Activated naive CD4-positive, alpha-beta T cell treated with anti-CD3 and anti-CD28 coated beads for 36 hours (primary cell): ENCODE measurements at regions of chr5 and their contacts with region 1.

Region 1: GRCh38 chr5:59152701-59153245 is 569.9 kb downstream of the RAB3C start:
- DNase-seq: peak; percentile 19
- H3K4me3 Mint-ChIP-seq: no peak overlapping the region
- H3K27ac Mint-ChIP-seq: peak overlapping the region; percentile 71
- H3K4me1 Mint-ChIP-seq: peaks cover 3% of the 10 kb centered on the region
- H3K27me3 Mint-ChIP-seq: no peaks in the 10 kb centered on the region

Region 2: DNA sequence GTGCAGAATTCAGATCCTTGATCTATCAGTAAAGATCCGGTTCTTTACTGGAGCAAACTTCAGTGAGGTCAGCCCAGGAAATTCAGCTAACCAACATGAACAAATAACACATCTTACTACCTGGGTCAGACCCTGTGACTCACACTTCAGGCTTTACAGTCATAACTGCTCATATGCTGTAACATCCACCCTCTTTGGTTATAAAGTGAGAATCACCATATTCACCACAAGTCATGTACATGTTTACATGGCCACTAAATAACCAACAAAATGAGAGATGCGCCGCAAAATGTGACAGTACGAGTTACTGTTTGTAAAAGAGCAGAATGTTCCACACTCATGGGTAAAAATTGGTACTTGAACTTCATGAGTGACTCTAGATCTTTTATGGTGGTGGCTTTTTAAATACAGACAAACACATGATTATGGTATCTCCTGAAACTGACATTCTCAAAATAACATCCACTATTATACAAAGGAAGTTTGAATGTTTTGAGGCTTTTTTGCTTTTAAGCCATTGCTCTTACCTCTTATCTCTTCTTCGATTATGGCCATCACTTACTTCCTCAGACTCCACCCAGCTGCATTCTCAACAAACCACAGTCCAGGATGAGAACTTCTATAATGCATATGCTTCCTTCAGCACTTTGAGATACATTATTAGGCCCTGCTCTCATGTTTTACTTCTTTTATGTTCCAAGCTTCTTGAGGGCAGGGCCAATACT is 53.3 kb before region 1 on chr5:
- CTCF ChIA-PET with region 1: no interaction called
- intact Hi-C with region 1: loop called (anchors 1 kb)
- DNase-seq: peak; percentile 68
- H3K4me3 Mint-ChIP-seq: no peak overlapping the region
- H3K27ac Mint-ChIP-seq: peak overlapping the region; percentile 20
- H3K4me1 Mint-ChIP-seq: peaks cover 32% of the 10 kb centered on the region
- H3K27me3 Mint-ChIP-seq: no peaks in the 10 kb centered on the region